HEK293T (cell line): ENCODE measurements at regions of chr15 and their contacts with region 1.

Region 1: DNA sequence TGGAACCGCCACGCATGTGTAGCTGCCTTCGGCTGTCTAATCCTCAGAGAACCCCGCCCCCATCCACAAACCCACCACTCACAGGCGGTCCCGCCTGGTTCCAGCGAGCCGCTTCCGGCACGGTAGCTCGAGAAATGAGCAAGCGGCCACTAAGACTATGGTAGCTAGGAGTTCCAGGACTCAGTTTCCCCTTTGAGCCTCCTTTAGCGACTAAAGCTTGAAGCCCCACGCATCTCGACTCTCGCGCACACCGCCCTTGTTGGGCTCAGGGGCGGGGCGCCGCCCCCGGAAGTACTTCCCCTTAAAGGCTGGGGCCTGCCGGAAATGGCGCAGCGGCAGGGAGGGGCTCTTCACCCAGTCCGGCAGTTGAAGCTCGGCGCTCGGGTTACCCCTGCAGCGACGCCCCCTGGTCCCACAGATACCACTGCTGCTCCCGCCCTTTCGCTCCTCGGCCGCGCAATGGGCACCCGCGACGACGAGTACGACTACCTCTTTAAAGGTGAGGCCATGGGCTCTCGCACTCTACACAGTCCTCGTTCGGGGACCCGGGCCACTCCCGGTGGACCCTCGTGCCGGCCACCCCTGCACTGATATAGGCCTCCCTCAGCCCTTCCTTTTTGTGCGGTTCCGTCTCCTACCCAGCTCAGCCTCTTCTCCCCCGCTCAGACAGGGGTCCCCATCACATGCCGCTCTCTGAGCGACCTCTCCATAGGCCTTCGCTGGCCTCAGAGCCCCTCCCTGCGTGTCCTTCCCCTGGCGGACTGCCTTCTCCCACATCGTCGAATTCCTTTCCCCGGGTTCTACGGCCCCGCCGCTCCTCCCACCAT is at the start of gene RAB11A:
- DNase-seq: peak; percentile 95

Region 2: GRCh38 chr15:65304389-65305144 is 564.8 kb before region 1 on chr15 and contains the start of gene RNU5B-1:
- CTCF ChIA-PET with region 1: no interaction called
- POLR2A ChIA-PET with region 1: interaction called, 12 read pairs
- DNase-seq: peak; percentile 77

Region 3: DNA sequence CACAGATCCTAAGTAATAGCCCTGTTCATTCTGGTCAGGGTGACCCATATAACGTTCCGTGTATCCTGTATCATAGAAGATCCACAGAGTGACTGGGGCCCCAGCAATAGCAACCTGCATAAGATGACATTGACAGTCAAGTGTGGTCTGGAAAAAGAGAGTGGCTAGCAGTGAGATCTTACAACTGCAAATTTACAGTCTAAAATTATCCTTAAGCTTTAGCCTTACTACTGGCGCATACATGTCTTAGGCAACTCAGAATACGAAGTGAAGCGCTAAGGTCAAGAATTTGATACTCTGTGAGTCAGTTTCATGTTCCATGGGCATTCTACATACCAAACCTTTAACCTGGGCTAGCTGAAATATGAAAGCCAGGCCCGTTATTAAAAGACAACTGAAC is 417.4 kb before region 1 on chr15:
- CTCF ChIA-PET with region 1: no interaction called
- POLR2A ChIA-PET with region 1: no interaction called
- DNase-seq: no peak

Region 4: GRCh38 chr15:65641768-65642475 is 227.4 kb before region 1 on chr15:
- CTCF ChIA-PET with region 1: interaction called, 3 read pairs
- POLR2A ChIA-PET with region 1: interaction called, 10 read pairs
- DNase-seq: no peak

Region 5: DNA sequence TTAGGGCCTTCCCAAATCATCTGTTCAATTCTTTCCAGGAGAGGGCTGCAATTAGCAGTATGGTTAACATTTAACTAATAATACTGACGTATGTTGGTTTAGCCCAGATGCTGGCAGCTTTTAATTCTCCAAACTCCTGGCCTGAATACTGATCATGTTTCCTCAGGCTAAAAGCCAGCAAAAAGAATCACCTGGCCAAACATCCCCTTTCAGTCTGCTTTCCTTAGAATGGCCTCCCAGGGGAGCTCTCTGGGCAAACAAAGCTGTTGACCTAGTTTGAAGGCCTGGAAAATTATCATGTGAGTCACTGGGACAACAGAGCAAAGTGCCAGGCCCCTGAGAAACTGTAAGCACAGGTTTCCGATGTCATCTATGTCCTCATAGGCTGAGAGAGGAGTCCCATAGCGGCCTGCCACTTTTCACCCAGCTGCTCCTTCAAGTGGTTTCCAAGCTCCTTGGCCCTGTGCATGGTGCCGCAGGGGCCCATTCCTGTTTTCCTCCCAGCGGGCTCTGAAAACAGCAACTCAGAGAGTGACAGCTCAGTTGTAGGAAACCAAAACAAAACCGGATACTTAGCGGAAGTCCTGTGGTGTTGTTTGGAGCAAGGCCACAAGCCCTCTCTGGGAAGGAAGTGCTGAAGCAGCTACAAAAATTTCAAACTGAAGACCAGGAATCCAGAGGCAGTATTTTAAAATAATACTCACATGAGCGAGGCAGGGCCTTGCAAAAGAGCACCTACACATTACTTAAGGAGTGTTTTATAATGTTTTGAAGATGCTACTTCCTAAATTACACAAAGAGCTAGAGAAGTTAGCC is 36.6 kb before region 1 on chr15:
- CTCF ChIA-PET with region 1: interaction called, 7 read pairs
- POLR2A ChIA-PET with region 1: interaction called, 27 read pairs
- DNase-seq: peak; percentile 76

Region 6: DNA sequence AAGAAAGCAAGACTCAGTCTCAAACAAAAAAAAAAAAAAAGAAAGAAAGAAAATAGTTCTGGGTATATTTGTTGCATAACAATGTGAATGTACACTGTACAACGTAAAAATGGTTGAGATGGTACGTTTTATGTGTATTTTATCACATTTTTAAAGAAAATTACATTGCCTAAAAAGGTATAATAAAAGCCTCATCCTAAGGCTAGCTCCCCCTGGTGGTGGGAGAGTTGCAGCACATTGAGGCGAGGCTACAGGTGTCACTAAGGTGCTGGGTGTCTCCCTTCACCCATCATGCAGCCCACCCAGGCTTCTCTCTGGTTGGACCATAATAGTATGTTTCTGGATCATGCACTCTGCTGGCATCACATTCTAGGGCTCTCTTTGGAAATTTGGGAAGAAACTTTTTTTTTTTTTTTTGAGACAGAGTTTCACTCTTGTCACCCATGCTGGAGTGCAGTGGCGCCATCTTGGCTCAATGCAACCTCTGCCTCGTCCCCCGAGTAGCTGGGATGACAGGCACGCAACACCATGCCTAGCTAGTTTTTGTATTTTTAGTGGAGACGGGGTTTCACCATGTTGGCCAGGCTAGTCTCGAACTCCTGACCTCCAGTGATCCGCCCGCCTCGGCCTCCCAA is 12.4 kb before region 1 on chr15:
- CTCF ChIA-PET with region 1: interaction called, 32 read pairs
- POLR2A ChIA-PET with region 1: interaction called, 22 read pairs
- DNase-seq: peak; percentile 62